Mammary epithelial cell (primary cell): ENCODE measurements at regions of chr19 and their contacts with region 1.

Region 1: DNA sequence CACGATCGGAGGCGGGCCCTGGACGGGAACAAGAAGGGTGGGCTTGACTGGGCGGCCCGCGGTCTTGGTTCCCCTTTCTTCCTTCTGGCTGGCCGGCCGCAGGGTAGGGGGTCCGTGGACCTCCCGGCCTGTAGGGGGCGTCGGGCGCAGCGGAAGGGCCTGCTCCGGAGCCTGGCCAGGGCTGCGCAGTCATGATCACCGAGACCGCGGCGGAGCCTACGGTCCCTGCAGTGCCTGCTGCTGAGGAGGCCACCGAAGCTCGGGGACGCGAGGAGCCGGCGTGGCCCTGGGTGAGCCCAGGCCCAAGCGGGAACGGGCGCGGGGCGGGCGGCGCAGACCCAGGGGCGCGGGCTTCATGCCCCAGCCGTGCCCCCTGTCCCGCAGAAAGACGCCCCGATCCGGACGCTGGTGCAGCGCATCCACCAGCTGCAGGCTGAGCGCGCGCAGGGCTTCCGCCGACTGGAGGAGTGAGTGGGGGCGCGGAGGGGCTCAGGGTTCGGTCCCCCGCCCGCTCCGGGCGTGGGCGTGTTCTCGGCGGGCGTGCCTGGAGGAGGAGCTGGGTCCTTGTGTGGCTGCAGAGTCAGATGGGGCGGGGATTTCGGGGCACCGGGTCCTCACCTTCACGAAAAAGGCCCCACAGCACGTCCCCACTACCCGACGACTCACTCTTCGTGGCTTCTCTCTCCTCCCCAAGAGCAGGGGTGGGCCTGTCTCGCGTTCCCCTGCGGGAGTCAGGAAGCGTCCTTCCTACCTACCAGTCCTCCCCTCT is at the start of gene REX1BD:
- DNase-seq: peak; percentile 66
- H3K4me3 ChIP-seq: peak within 1 kb of the TSS; percentile 72 to 89 (median 83)
- H3K27ac ChIP-seq: peak within 1 kb of the TSS; percentile 35
- H3K4me1 ChIP-seq: peaks cover 19% of the 10 kb centered on the region
- H3K27me3 ChIP-seq: no peaks in the 10 kb centered on the region
- CTCF ChIP-seq: peak; percentile 69 to 85
- total RNA-seq, gene REX1BD: 30.0 to 59.0 TPM

Region 2: DNA sequence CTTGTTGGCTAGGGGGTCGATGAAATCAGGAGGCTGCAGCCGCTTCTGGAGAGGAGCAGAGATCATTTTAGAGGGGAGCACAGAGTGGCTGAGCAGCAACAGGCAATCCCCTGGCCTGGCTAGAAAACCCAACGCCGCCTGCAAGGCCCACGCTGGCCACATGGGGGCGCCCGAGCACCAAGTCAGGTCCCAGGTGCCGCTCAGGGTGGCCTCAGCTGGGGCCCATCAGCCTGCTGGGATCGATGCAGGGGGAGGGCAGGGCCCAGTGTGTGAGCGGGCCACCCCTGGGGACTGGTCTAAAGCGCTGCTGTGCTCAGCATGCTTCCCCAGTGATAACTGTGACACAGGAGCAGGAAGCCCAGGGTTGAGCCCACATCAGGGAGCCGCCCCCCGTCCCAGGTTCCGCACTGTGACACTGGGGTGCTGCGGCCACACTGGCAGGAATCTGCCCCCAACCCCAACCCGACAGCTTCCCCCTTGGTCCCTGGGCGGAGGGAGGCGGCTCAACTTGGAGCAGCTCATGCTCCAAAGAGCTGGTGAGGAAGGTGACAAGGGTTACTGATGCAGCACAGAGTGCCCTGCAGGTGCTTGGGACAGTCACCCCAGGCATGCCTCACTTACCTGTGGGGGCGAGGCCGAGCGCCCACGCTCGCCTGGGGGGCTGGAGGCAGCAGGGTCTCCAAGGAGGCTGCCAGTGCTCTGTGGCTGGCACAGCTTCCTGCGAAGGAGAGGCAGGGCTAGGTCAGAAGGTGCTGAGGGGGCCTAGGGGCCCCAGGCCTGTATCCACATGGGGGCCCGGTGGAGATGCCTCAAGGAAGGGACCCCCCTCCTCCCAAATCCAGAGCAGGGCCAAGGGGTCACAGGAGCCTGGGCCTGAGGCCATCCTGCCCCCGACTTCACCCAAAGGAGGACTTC is 137.6 kb before region 1 on chr19:
- CTCF ChIA-PET with region 1: no interaction called
- dilution Hi-C with region 1: no loop called
- in situ Hi-C with region 1: loop called in 1 of 2 experiments (anchors 10 kb)
- intact Hi-C with region 1: loop called (anchors 1 kb)
- DNase-seq: no peak
- H3K4me3 ChIP-seq: no peak overlapping the region
- H3K27ac ChIP-seq: no peak overlapping the region
- H3K4me1 ChIP-seq: peaks cover 9% of the 10 kb centered on the region
- H3K27me3 ChIP-seq: no peaks in the 10 kb centered on the region
- CTCF ChIP-seq: peak; percentile 92 to 98

Region 3: DNA sequence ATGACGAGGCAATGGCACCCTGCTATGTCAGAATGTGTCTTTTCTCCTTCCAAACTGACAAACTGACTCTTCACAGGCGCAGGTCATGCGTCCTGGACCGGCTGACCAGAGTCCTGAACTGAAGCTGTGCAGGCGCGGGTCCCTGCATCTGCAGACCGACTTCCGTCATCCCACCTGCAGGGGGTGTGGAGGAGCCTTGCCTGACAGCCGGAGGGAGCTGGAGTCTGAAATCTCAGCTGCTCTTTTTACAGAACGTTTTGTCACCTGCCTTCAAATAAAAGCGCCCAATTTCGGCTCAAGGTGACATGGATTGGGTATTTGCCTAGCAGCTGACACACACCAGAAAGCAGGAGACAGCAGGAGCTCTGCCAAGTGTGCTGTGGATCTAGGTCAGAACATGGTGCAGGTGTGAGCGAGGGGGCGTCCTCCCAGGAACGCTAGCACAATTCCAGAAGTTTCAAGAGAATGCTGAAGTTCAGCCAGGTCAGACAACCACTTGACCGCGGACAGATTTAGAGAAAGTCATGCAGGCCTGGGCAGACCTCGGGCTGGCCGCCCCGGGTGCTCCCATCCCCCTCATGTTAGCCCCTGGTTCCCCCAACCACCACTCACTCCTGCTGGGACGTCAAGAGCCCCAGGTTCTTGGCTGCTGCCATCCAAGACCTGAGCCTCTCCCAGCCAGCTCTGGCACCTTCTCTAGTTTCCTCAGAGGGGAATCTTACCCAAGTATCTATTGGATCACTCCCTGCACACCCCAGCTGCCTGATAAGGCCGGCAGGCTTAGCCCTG is 99.8 kb before region 1 on chr19:
- CTCF ChIA-PET with region 1: interaction called, 3 read pairs
- dilution Hi-C with region 1: loop called (anchors 5 kb)
- in situ Hi-C with region 1: no loop called
- intact Hi-C with region 1: no loop called
- DNase-seq: no peak
- H3K4me3 ChIP-seq: no peak overlapping the region
- H3K27ac ChIP-seq: no peak overlapping the region
- H3K4me1 ChIP-seq: peaks cover 29% of the 10 kb centered on the region
- H3K27me3 ChIP-seq: no peaks in the 10 kb centered on the region
- CTCF ChIP-seq: peak; percentile 26 to 49

Region 4: DNA sequence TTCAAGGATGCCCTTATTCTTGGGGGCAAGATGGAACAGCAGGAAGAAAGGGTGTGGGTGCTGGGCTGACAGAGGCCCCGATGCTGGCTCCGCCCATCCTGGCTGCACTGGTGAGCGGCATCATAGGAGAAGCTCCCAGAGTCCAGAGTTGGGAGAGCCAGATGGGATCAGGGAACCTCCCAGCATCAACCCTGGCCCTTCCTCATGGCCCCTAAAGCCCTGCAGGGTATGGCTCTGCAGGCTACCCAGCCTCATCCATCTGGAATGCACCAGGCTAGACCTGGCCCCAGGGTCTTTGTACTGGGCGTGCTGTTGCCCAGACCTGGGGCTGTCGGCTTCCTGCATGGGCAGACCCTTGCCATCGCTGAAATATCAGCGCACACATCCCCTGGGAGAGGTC is 59.0 kb before region 1 on chr19:
- CTCF ChIA-PET with region 1: interaction called, 4 read pairs
- dilution Hi-C with region 1: loop called (anchors 5 kb)
- in situ Hi-C with region 1: no loop called
- intact Hi-C with region 1: no loop called
- DNase-seq: no peak
- H3K4me3 ChIP-seq: no peak overlapping the region
- H3K27ac ChIP-seq: no peak overlapping the region
- H3K4me1 ChIP-seq: peaks cover 14% of the 10 kb centered on the region
- H3K27me3 ChIP-seq: no peaks in the 10 kb centered on the region
- CTCF ChIP-seq: no peak

Region 5: DNA sequence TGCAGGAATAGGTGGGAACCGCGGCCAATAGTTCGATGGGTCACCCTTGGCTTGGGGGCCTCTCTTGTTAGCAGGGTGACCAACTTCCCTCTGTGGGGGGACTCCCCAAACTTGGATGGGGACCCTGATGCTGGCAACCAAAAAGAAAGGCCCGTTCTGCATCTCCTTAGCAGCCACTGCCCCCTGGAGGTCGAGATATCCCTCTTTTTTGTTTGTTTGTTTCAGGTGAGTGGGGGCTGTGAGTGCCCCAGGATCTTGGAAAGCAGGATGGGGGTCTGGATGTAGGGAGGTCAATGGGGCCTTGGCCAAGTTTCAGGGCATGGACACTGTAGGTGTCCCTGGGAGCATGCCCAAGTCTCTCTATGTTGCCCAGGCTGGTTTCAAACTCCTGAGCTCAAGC is 87.0 kb after region 1 on chr19:
- CTCF ChIA-PET with region 1: interaction called, 3 read pairs
- dilution Hi-C with region 1: loop called (anchors 5 kb)
- in situ Hi-C with region 1: no loop called
- intact Hi-C with region 1: loop called (anchors 1 kb)
- DNase-seq: no peak
- H3K4me3 ChIP-seq: no peak overlapping the region
- H3K27ac ChIP-seq: no peak overlapping the region
- H3K4me1 ChIP-seq: peaks cover 19% of the 10 kb centered on the region
- H3K27me3 ChIP-seq: no peaks in the 10 kb centered on the region
- CTCF ChIP-seq: peak; percentile 23 to 54

Region 6: GRCh38 chr19:18846862-18847548 is 258.2 kb after region 1 on chr19:
- CTCF ChIA-PET with region 1: interaction called, 4 read pairs
- dilution Hi-C with region 1: no loop called
- in situ Hi-C with region 1: loop called in 1 of 2 experiments (anchors 10 kb)
- intact Hi-C with region 1: loop called (anchors 1 kb)
- DNase-seq: peak; percentile 59
- H3K4me3 ChIP-seq: no peak overlapping the region
- H3K27ac ChIP-seq: no peak overlapping the region
- H3K4me1 ChIP-seq: peaks cover 56% of the 10 kb centered on the region
- H3K27me3 ChIP-seq: no peaks in the 10 kb centered on the region
- CTCF ChIP-seq: peak; percentile 91 to 96

Region 7: GRCh38 chr19:18985257-18985656 is 396.5 kb after region 1 on chr19:
- CTCF ChIA-PET with region 1: no interaction called
- dilution Hi-C with region 1: no loop called
- in situ Hi-C with region 1: no loop called
- intact Hi-C with region 1: loop called (anchors 5 kb)
- DNase-seq: no peak
- H3K4me3 ChIP-seq: no peak overlapping the region
- H3K27ac ChIP-seq: no peak overlapping the region
- H3K4me1 ChIP-seq: peaks cover 3% of the 10 kb centered on the region
- H3K27me3 ChIP-seq: peaks cover 1% of the 10 kb centered on the region
- CTCF ChIP-seq: no peak